Activated CD8-positive, alpha-beta memory T cell treated with anti-CD3 and anti-CD28 coated beads, Interleukin-2, amount 10 ng/mL, durations not matched to agents 7 days and 5 days (primary cell): ENCODE measurements at regions of chr12 and their contacts with region 1.

Region 1: DNA sequence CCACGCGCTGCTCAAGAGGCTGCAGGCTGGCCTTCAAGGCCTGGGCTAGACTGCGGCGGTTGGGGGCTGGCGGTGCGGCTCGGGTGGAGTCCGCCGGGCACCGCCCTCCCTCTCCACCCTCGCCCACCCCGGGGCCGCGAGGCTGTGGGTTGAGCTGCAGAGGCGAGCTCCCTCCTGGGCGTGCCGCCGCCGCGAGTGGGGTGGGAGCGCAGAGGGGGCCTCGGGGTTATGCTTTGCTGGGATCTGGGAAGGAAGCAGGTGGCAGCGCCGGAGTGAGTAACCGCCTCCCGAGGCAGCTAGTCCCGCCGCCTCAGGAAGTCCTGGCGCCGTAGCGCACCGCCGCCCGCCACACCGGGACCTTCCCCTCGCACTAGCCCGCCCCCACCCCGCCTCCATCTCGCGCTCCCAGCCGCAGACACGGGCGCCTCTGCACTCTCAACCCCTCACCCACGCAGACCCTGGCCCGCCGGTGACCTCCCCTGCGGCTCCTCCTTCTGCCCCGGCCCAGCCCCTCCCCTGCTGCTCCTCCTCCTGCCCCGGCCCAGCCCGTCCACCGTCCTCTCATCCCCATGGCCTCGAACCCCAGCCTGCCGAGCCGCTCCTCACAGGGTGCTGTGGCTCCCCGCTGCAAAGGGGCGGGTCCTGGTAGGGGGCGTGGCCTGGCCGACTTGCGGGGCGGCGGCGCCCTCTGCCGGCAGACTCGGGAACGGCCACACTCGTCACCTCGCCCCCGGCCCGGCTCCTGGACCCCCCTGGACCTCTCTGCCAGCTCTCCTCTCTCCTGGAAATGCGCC is 16.6 kb downstream of the TAMALIN start:
- DNase-seq: peak; percentile 94
- ATAC-seq: peak; percentile 60
- H3K4me3 Mint-ChIP-seq: peak overlapping the region; percentile 80
- H3K27ac Mint-ChIP-seq: peak overlapping the region; percentile 98
- H3K4me1 Mint-ChIP-seq: peaks cover 42% of the 10 kb centered on the region
- H3K27me3 Mint-ChIP-seq: peaks cover 4% of the 10 kb centered on the region

Region 2: GRCh38 chr12:51823875-51824565 is 199.4 kb before region 1 on chr12:
- CTCF ChIA-PET with region 1: interaction called, 11 read pairs
- DNase-seq: no peak
- ATAC-seq: no peak
- H3K4me3 Mint-ChIP-seq: no peak overlapping the region
- H3K27ac Mint-ChIP-seq: no peak overlapping the region
- H3K4me1 Mint-ChIP-seq: peaks cover 25% of the 10 kb centered on the region
- H3K27me3 Mint-ChIP-seq: no peaks in the 10 kb centered on the region

Region 3: DNA sequence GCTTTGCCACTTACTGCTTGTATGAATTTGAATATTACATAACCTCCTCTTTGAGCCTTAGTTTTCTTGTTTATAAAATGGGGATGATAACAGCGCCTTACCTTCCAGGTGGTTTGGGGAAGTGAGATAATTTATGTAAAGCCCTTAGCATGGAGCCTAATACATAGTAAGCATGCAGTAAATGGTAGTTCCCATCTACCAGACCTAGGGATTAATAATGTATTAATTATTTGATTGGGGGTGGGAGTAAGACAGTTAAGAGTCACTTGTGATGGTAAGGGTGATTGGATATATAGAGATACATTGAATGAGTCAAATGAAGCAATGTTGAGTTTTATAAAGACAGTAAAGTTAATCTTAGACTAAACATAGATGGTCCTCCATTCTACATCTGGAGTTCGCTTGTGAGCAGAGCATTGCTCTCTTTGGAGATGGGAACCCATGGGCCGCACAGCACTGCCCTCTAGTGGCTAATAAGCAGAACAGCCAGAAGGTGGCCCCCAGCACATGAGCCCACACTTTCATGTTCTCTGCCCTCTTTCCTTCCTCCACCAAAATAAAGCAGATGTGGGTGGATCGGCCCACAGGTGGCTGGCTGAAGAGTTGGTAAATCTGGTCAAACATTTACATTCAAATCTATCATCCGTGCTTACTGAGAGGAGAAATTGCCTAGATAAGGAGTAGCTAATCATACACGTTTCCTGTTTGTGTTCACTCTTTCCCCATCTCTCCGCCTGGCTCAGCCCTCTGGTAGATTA is 43.1 kb before region 1 on chr12:
- CTCF ChIA-PET with region 1: interaction called, 400 read pairs
- DNase-seq: peak; percentile 78
- ATAC-seq: peak; percentile 95
- H3K4me3 Mint-ChIP-seq: no peak overlapping the region
- H3K27ac Mint-ChIP-seq: no peak overlapping the region
- H3K4me1 Mint-ChIP-seq: peaks cover 28% of the 10 kb centered on the region
- H3K27me3 Mint-ChIP-seq: peaks cover 8% of the 10 kb centered on the region

Region 4: GRCh38 chr12:52004042-52004648 is 19.2 kb before region 1 on chr12:
- CTCF ChIA-PET with region 1: interaction called, 197 read pairs
- DNase-seq: no peak
- ATAC-seq: no peak
- H3K4me3 Mint-ChIP-seq: no peak overlapping the region
- H3K27ac Mint-ChIP-seq: no peak overlapping the region
- H3K4me1 Mint-ChIP-seq: peaks cover 9% of the 10 kb centered on the region
- H3K27me3 Mint-ChIP-seq: peaks cover 45% of the 10 kb centered on the region

Region 5: DNA sequence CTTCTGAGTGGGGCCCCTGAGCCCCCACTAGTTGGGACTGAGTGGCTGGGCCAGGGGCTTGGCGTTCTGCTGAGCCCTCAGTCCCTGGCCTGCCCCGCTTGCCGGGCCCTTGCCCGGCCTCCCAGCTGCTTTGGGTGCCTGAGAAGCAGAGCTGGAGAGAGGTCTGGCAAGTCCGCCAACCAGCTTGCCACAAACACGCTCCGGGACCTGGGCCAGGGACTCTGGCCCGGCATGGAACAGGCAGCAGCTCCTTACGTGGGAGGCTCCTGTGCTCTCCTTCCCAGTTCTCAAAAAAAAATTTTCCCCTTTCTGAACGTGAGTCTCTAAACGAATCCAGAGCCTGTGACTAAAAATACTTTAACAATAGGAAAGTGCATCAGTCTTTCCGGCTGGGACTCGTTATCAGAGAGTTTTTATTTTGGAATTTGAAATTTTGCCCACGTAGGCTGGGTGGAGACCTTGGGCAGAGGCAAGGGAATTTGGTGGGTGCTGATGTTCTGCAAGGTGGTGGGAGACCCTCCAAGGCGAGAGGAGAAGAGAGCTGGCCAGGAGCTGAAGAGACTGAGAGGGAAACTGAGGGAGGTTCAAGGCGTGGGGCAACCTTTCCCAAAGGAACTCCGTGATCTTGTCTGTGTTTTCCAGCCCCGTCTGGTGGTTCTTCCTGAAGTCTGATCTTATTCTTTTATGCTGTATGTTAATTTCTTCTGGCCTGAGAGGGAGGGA is 21.0 kb after region 1 on chr12:
- CTCF ChIA-PET with region 1: interaction called, 182 read pairs
- DNase-seq: no peak
- ATAC-seq: no peak
- H3K4me3 Mint-ChIP-seq: no peak overlapping the region
- H3K27ac Mint-ChIP-seq: no peak overlapping the region
- H3K4me1 Mint-ChIP-seq: peaks cover 31% of the 10 kb centered on the region
- H3K27me3 Mint-ChIP-seq: peaks cover 3% of the 10 kb centered on the region

Region 6: GRCh38 chr12:52082988-52083637 is 59.7 kb after region 1 on chr12:
- CTCF ChIA-PET with region 1: interaction called, 410 read pairs
- DNase-seq: peak; percentile 75
- ATAC-seq: peak; percentile 78
- H3K4me3 Mint-ChIP-seq: no peak overlapping the region
- H3K27ac Mint-ChIP-seq: no peak overlapping the region
- H3K4me1 Mint-ChIP-seq: peaks cover 4% of the 10 kb centered on the region
- H3K27me3 Mint-ChIP-seq: peaks cover 15% of the 10 kb centered on the region

Region 7: GRCh38 chr12:52121824-52122539 is 98.6 kb after region 1 on chr12:
- CTCF ChIA-PET with region 1: interaction called, 269 read pairs
- DNase-seq: peak; percentile 75
- ATAC-seq: peak; percentile 35
- H3K4me3 Mint-ChIP-seq: no peak overlapping the region
- H3K27ac Mint-ChIP-seq: no peak overlapping the region
- H3K4me1 Mint-ChIP-seq: peaks cover 29% of the 10 kb centered on the region
- H3K27me3 Mint-ChIP-seq: peaks cover 26% of the 10 kb centered on the region